Calu3 (cell line): ENCODE measurements at regions of chr3 and their contacts with region 1.

Region 1: DNA sequence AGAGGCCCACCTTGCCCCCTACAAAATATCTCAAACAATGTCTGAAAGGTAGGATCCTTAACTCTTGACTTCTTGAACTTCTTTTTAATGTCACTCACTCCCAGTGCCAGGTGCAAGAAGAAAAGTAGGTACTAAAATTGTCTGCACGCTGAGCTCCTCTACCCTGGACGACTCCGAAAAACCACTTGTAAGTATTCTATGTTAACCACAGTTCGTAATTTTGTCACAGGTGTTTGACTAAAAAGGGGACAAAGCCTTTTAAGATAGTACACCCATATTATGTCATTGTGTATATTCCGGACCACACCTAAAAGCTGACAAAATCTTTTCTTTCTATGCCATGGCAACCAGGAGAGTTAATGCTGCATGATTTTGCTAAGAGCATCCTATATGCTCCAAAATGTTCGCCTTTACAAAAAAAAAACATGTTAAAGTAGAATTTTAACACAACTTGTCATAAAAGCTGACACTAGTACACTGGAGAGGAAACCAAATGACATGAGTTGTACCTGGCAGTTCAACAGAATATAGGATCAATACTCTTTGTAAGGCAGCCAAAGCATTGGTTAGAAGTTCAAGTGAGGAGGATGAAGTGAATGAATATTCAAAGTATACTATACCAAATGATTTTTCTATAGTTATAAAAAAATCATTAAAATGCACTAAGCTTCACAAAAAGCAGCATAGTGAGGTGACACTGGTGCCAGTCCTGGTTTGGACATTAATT is 210.5 kb downstream of the FOXP1 start:
- DNase-seq: no peak
- H3K4me3 Mint-ChIP-seq: no peak overlapping the region
- H3K27ac Mint-ChIP-seq: no peak overlapping the region
- H3K4me1 Mint-ChIP-seq: no peaks in the 10 kb centered on the region
- H3K27me3 Mint-ChIP-seq: no peaks in the 10 kb centered on the region
- CTCF ChIP-seq: no peak

Region 2: GRCh38 chr3:72280876-72281275 is 907.8 kb after region 1 on chr3:
- CTCF ChIA-PET with region 1: interaction called, 10 read pairs
- intact Hi-C with region 1: no loop called
- DNase-seq: no peak
- H3K4me3 Mint-ChIP-seq: no peak overlapping the region
- H3K27ac Mint-ChIP-seq: no peak overlapping the region
- H3K4me1 Mint-ChIP-seq: no peaks in the 10 kb centered on the region
- H3K27me3 Mint-ChIP-seq: peaks cover 90% of the 10 kb centered on the region
- CTCF ChIP-seq: no peak